AG04449 (cell line): ENCODE measurements at regions of chr16 and their contacts with region 1.

Region 1: DNA sequence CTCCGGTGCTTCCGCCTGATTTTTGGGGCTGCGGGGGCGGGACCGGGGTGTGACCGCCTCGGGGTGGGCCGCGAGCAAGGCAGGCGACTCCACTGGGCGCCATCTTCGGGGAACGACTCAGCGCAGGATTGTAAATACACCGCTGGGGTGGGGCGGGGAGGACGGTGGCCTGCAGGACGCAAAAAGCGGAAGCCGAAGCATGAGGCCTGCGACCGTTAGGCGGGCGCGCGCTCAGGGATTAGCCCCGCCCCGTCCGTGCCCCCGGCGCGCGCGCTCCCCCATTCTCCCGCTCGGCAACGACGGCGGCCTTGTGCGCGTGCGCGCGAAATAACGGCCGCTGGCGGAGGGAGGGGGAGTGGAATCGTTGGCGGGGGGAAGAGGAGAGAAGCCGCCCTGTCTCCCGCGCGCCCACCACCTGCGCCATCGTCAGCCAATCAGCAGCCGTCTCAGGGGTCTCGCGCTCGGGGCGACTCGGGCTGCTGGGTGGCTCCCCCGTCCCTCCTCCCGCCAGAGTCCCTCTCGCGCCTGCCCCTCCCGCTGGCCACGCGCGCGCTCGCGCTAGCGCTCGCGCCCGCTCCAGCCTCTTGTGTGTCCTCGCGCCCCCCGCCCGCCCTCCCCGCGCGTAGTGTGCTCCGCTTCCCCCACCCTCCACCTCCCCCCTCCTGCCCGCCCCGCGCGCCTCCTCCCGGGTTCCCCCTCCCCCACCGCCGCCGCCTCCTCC is 791 bp upstream of the MAZ start:
- DNase-seq: peak; percentile 83
- H3K4me3 ChIP-seq: peak overlapping the region; percentile 86
- CTCF ChIP-seq: no peak

Region 2: GRCh38 chr16:29687760-29688159 is 117.8 kb before region 1 on chr16:
- CTCF ChIA-PET with region 1: no interaction called
- POLR2A ChIA-PET with region 1: no interaction called
- DNase-seq: no peak
- H3K4me3 ChIP-seq: no peak overlapping the region
- CTCF ChIP-seq: no peak

Region 3: GRCh38 chr16:29790183-29790952 is 15.2 kb before region 1 on chr16 and contains the start of gene KIF22:
- CTCF ChIA-PET with region 1: interaction called, 27 read pairs
- POLR2A ChIA-PET with region 1: interaction called, 6 read pairs
- DNase-seq: peak; percentile 89
- H3K4me3 ChIP-seq: peak within 1 kb of the TSS; percentile 96
- CTCF ChIP-seq: peak; percentile 87

Region 4: GRCh38 chr16:29815793-29816693 is 10.5 kb after region 1 on chr16 and contains the start of gene PAGR1:
- CTCF ChIA-PET with region 1: interaction called, 25 read pairs
- POLR2A ChIA-PET with region 1: interaction called, 25 read pairs
- DNase-seq: peak; percentile 98
- H3K4me3 ChIP-seq: peak within 1 kb of the TSS; percentile 85
- CTCF ChIP-seq: peak; percentile 91

Region 5: DNA sequence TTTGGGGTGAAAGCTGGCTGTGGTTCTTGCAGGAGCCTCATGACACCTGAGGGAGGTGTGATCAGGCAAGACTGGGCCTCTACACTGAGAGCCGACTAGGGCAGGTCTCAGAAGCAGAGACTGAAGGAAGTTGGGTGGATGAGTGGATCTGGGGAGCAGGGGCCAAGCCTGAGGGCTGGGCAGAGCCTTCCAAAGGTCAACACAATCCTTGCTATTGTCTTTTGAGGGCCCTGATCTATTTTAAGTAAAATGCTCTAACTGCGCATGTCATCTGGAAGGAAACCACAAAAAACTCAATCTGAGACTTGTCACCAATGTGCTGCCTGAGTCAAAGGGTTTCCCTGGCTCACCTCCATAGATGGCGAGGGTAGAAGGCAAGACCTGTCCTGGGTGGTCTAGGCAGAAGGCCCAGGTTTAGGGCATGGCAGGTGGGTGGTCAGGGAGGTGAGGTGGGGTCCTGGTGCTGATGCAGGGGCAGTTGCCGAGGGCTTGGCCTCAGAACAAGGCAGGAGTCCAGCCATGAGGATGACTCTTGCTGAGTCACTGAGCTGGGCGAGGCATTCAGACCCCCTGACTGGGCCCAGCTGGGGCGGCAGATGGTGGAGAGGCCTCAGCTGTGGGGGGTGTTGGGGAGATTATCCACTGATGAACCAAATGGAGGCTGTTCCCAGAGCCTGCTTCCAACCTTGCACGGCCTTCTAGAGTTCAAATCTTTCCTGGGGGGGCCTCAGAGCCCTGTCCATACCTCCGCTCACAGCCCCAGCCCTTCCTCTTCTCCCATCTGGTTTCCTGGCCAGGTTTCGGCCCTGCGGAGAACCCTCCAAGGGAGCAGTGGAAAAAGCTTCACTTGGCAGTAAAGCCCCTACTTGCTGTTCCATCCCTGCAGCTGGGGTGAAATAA is 19.9 kb after region 1 on chr16:
- CTCF ChIA-PET with region 1: interaction called, 20 read pairs
- POLR2A ChIA-PET with region 1: interaction called, 19 read pairs
- DNase-seq: no peak
- H3K4me3 ChIP-seq: peak overlapping the region; percentile 23
- CTCF ChIP-seq: no peak

Region 6: GRCh38 chr16:29848420-29849297 is 43.1 kb after region 1 on chr16:
- CTCF ChIA-PET with region 1: interaction called, 34 read pairs
- POLR2A ChIA-PET with region 1: interaction called, 5 read pairs
- DNase-seq: no peak
- H3K4me3 ChIP-seq: no peak overlapping the region
- CTCF ChIP-seq: peak; percentile 90

Region 7: DNA sequence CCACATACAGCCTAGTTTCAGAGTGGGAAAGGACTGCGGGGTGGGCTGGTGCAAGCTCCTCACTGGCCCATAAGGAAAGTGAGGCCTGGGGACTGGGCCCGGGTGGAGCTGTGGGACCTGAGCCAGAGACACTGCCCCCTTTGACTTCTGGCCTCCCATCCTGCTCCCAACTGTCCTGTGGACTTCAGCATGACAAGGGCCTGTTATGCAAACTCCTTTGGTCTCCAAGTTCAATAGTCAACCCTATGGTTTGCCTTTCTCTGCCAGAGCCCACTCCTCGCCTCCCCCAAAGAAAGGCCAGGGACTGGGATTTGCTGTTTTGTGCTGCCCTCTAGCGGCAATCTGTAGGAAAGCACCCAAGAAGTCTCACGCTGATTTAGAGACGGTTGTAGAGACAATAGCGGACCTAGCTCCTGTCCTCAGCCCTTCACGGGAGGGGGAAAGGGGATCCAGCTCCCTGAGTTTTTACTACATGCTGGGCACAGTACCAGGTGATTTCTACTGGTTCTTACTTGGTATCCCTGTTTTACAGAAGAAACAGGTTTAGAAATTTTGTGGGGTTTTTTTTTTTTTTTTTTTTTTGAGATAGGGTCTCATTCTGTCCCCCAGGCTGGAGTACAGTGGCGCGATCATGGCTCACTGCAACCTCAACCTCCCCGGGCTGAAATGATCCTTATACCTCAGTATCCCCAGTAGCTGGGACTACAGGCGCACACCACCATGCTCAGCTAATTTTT is 226.7 kb after region 1 on chr16:
- CTCF ChIA-PET with region 1: interaction called, 13 read pairs
- POLR2A ChIA-PET with region 1: no interaction called
- DNase-seq: no peak
- H3K4me3 ChIP-seq: no peak overlapping the region
- CTCF ChIP-seq: peak; percentile 77